ENCODE measurements at regions of chr13 and their contacts with region 1.

Region 1: DNA sequence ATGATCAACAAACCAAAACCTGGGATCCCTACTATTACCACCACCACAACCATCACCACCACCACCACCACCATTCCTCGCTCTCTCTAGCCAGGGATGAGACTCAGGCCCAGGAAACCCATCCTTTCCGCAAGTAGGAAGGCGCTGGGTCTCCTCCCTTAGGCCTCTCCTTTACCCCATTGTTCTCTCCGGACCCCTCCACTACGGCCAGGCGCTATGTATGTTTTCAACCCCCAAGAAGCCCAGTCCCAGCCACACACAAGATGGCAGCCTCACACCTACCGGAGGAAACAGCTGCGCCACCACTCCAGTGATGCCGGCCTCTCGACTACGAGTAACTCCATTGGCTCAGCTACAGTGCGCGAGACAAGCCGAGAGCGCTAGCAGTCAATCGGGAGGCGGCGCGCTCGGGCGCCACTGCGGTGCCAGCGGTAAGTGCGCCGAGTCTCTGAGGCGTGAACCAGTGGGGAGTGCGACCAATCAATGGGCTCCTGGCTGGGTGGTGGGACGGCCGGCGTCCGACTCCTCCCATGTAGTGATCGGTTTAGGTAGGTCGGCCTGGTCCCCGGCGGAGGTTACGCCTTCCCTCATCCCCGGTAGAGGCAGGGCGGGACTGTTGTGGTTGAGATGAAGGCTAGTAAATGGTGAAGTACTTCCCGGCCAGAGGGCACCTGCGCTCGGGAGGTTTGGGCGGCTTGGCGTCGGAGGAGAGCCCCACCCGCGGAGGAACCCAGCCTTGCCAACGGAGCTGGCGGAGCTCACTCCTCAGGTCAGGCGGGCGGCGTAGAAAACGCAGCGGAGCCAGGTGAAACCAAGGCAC is at the starts of genes CAB39L and SETDB2:
- DNase-seq: peak; percentile 99
- ATAC-seq: peak; percentile 94
- H3K4me3 Mint-ChIP-seq: peak within 1 kb of the TSS; percentile 100
- H3K27ac Mint-ChIP-seq: peak within 1 kb of the TSS; percentile 100
- H3K4me1 Mint-ChIP-seq: peaks cover 57% of the 10 kb centered on the region
- H3K27me3 Mint-ChIP-seq: no peaks in the 10 kb centered on the region
- total RNA-seq, gene CAB39L: 4.8 to 5.7 TPM
- total RNA-seq, gene SETDB2: 14.2 to 15.1 TPM

Region 2: GRCh38 chr13:48892053-48892690 is 551.7 kb before region 1 on chr13:
- CTCF ChIA-PET with region 1: no interaction called
- POLR2A ChIA-PET with region 1: no interaction called
- intact Hi-C with region 1: loop called in 1 of 2 experiments (anchors 10 kb)
- DNase-seq: no peak
- ATAC-seq: peak; percentile 97
- H3K4me3 Mint-ChIP-seq: no peak overlapping the region
- H3K27ac Mint-ChIP-seq: peak overlapping the region; percentile 51
- H3K4me1 Mint-ChIP-seq: peaks cover 34% of the 10 kb centered on the region
- H3K27me3 Mint-ChIP-seq: peaks cover 7% of the 10 kb centered on the region

Region 3: DNA sequence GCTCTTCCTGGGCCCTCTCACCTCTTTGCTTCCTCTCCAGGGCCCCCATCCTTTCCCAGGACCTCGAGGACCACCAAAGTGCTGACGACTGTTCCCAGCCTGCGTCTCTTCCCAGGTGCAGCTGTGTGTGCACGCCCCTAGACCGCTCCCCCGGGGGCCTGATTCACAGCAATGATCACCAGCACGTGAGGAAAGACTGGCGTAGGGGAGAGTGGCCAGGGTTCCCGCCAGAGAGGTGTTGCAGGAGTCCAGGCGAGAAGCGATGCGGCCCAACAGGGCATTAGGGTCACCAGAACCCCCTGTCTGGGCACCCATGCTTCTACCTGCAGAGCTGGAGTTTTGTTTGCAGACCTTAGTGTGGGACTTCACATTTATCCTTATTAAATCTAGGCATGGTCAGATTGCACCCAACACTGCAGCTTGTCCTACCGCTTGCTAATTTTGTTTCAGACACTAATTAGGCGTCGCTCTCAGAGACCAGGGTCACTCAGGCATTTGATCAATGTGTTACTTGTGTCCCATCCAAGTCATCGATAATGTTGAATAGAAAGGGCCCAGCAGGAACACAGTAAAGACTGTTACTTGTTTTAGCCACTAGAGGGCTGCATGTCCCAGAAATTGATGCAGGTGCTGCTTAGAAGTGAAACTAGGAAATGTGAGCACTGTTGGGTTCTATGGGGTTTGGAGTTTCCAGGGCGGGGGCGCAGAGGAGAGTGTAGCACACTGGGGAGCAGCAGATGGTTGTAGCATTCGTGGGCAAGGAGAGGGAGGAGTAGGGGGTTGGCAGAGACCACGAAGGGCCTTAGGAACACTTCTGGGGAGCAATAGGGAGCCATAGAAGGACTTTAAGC is 142.9 kb before region 1 on chr13:
- CTCF ChIA-PET with region 1: no interaction called
- POLR2A ChIA-PET with region 1: no interaction called
- intact Hi-C with region 1: loop called (anchors 2 to 5 kb)
- DNase-seq: peak; percentile 79
- ATAC-seq: peak; percentile 98
- H3K4me3 Mint-ChIP-seq: peak overlapping the region; percentile 48
- H3K27ac Mint-ChIP-seq: peak overlapping the region; percentile 72
- H3K4me1 Mint-ChIP-seq: peaks cover 10% of the 10 kb centered on the region
- H3K27me3 Mint-ChIP-seq: no peaks in the 10 kb centered on the region

Region 4: GRCh38 chr13:49585220-49586157 is 141.6 kb after region 1 on chr13 and contains the start of gene RCBTB1:
- CTCF ChIA-PET with region 1: no interaction called
- POLR2A ChIA-PET with region 1: interaction called, 7 read pairs
- intact Hi-C with region 1: loop called (anchors 1 kb)
- DNase-seq: peak; percentile 80
- ATAC-seq: peak; percentile 95
- H3K4me3 Mint-ChIP-seq: peak within 1 kb of the TSS; percentile 99
- H3K27ac Mint-ChIP-seq: peak within 1 kb of the TSS; percentile 95
- H3K4me1 Mint-ChIP-seq: peaks cover 29% of the 10 kb centered on the region
- H3K27me3 Mint-ChIP-seq: no peaks in the 10 kb centered on the region
- total RNA-seq, gene RCBTB1: 9.8 to 14.9 TPM

Region 5: GRCh38 chr13:49792550-49793324 is 348.8 kb after region 1 on chr13 and contains the start of gene KPNA3:
- CTCF ChIA-PET with region 1: interaction called, 3 read pairs
- POLR2A ChIA-PET with region 1: interaction called, 5 read pairs
- intact Hi-C with region 1: loop called (anchors 1 to 2 kb)
- DNase-seq: peak; percentile 98
- ATAC-seq: peak; percentile 93
- H3K4me3 Mint-ChIP-seq: peak within 1 kb of the TSS; percentile 89
- H3K27ac Mint-ChIP-seq: peak within 1 kb of the TSS; percentile 88
- H3K4me1 Mint-ChIP-seq: peaks cover 30% of the 10 kb centered on the region
- H3K27me3 Mint-ChIP-seq: peaks cover 4% of the 10 kb centered on the region
- total RNA-seq, gene KPNA3: 51.7 to 58.0 TPM

Region 6: DNA sequence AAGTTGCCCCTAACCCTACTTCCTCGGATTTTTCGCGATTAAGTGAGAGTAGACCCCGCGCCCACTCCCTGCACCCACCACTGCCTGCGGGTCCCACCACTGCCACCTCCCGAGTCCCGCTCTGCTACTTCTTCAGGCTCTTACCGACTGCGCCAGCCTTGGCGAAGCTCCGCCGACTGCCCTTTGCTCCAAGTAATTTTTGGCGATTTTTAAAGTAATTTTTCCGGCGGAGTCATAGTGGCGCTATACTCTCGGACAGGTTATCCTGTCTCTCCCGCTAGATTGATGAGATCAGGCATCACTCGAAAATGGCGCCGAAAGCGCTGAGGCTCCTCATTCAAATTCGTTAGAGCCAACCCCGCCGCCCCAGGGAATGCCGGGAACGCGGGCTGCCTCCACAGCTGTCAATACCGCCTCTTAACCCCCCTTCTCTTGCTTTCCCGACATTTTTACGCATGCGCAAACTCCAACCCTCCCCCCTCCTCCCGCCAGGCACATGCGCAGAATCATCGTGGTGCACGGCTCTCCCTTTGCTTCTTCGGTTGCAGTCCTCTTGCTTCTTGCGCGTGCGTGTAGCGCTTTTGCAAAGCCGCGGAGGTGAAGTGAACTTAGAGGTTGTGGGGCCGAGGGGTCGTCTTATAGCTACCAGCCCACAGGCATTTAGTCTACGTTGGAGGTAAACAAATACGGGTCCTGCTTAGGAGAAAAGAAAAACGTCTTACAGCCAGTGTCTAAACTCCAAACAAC is 637.9 kb after region 1 on chr13:
- CTCF ChIA-PET with region 1: no interaction called
- POLR2A ChIA-PET with region 1: no interaction called
- intact Hi-C with region 1: loop called in 1 of 2 experiments (anchors 5 kb)
- DNase-seq: peak; percentile 99
- ATAC-seq: peak; percentile 76
- H3K4me3 Mint-ChIP-seq: peak overlapping the region; percentile 94
- H3K27ac Mint-ChIP-seq: peak overlapping the region; percentile 98
- H3K4me1 Mint-ChIP-seq: peaks cover 37% of the 10 kb centered on the region
- H3K27me3 Mint-ChIP-seq: peaks cover 8% of the 10 kb centered on the region